ENCODE measurements at regions of chr20 and their contacts with region 1.

Region 1: DNA sequence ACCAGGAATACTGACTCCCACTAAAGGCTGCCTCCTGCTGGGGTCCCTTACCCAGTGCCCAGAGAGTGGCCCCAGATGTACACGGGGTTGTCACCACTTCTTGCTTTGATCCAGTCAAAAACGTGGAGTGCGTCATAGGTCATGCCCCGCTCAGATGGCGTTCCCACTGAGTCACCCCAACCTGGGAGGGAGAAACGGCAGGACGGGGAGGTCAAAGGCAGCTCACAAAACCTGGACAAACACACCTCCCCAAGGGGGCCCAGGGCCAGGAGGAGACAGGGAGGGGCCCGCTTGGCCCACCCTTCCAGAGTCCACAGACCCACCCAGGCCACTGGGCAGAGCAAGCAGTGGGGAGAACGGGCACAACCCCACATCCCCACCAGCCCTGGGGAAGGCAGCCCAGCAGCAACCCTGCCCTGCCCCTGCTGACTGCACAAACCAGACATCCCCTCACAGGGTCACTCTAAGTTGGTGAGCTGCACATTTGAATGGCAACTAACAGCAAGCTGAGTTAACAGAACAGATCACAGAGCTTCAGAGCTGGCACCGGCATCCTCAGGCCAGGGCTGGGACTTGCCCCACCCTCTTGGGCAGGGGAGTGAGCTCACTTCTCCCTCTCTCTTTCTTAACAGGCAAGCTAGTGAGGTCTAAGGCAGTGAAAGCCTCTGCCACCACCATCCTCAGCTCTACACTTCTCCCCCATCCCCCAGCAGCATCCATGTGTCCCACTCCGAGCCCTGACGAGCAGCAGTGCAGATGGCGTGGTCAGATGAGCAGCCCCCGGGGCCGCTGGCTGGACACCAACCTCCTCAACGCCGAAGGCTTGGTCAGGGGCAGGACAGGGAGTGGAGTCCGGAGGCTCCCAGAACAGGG is 61.7 kb downstream of the PYGB start:
- DNase-seq: peak; percentile 62 to 80 (median 75)
- ATAC-seq: peak; percentile 79
- H3K4me3 ChIP-seq: no peak overlapping the region
- H3K4me1 ChIP-seq: peaks cover 31% of the 10 kb centered on the region
- CTCF ChIP-seq: no peak

Region 2: DNA sequence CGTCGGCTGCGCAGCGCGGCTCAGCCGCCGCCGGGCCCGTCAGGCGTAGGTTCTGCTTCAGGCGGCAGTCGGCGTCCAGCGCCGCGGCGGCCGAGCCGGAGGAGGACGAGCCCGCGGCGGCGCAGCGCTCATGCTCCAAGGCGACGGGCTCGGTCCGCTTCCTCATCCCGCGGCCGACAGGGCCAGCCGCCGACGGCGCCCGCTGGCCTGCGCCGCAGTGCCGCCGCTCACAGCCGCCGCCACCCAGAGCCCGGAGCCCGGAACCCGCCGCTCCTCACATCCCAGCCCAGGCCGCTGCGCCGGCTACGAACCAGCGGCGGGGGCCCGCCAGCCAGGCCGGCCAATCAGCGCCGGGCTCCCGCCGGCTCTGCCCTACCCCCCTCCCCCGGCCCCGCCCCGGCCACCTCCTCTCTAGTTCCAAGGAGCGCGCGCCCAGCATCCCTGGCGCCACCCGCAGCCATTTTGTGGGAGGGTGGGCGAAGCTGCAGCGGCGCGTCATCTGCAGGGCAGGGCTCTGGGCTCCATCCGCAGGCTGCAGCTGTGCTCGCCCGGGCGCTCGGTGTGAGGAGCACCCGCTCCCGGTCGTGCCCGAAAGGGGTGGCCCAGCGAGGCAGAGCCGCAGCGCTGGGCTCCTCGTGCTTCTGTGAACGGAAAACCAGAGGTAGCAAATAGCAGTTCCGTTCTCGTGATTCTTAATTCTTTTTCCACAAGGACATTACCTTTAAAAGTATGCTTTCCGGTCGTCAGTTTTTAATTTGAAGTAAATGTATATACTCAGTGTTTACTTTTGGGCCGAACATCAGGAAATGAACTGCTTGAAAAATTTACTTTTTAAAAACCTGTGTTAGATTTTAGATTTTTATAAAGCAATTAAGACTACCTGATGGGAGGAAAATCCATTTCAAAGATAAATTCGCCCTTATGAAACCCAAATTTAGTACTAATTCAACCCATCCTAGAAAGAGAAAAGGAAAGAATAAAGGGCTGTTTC is 81.2 kb after region 1 on chr20 and contains the start of gene ABHD12:
- intact Hi-C with region 1: loop called in 1 of 2 experiments (anchors 10 kb)
- DNase-seq: peak; percentile 96 to 98 (median 98)
- ATAC-seq: peak; percentile 97
- H3K4me3 ChIP-seq: peak within 1 kb of the TSS; percentile 80
- H3K4me1 ChIP-seq: no peaks in the 10 kb centered on the region
- CTCF ChIP-seq: no peak
- total RNA-seq, gene ABHD12: 47.3 to 65.5 (median 59.5) TPM

Region 3: GRCh38 chr20:25407311-25408169 is 97.9 kb after region 1 on chr20 and contains the start of gene GINS1:
- intact Hi-C with region 1: loop called in 1 of 2 experiments (anchors 5 kb)
- DNase-seq: peak; percentile 88 to 90 (median 90)
- ATAC-seq: peak; percentile 99
- H3K4me3 ChIP-seq: peak within 1 kb of the TSS; percentile 35
- H3K4me1 ChIP-seq: peaks cover 6% of the 10 kb centered on the region
- CTCF ChIP-seq: no peak
- total RNA-seq, gene GINS1: 1.8 to 8.6 (median 1.9) TPM